ENCODE measurements at regions of chr9 and their contacts with region 1.

Region 1: DNA sequence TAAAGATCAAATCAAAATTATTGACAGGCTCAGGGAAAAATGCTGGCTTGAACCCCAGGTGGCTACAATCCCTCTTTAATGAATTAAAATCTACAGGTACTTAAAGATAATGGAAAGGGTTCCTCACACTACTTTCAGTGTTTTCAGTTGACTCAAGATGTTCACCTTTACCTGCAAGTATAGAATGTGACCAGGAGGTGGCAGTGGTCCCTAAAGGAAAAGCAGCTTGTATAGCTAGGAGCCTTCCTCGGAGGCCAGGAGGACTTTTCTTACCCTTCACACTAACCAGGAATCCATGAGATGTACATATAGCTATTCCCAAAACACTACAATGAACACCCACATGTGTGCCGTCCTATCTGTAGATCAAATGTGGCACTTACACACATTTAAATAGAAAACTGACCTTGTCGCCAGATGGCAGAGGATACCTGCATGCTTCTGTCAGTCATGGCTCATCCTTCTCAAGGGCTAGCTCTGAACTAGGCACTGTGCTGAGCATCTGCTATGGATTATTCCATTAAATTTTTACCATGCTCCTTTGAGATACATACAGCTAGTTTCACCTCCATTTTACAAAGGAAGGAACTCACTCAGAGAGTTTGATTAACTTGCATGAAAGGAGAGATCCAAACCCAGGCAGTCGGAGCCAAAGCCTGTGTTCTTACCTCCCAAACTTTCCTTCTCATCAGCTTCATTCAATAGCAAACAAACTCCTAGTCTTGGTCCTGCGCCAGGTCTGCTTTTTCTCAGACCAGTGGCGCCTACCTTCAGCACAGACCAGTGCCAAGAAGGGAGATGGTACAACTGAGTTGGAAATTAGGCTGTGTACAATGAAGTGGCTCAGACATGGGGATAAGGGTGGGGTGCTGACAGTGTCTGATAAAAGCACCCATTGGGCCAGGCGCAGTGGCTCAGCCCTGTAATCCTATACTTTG is 24.5 kb downstream of the C9orf152 start:
- DNase-seq: peak; percentile 77
- ATAC-seq: peak; percentile 35; the same call in 1 of the 2 replicates
- H3K4me3 ChIP-seq: no peak overlapping the region
- H3K27ac ChIP-seq: no peak overlapping the region
- H3K4me1 ChIP-seq: peaks cover 9% of the 10 kb centered on the region
- H3K27me3 ChIP-seq: no peaks in the 10 kb centered on the region
- CTCF ChIP-seq: peak; percentile 73
- POLR2A ChIP-seq: no peak; the same call in 1 of the 2 replicates
- RAD21 ChIP-seq: peak; percentile 83

Region 2: GRCh38 chr9:110217656-110218099 is 34.2 kb after region 1 on chr9:
- CTCF ChIA-PET with region 1: interaction called, 3 read pairs
- POLR2A ChIA-PET with region 1: no interaction called
- dilution Hi-C with region 1: no loop called
- in situ Hi-C with region 1: no loop called
- intact Hi-C with region 1: loop called (anchors 2 kb)
- DNase-seq: peak; percentile 63
- ATAC-seq: peak; percentile 74
- H3K4me3 ChIP-seq: no peak overlapping the region
- H3K27ac ChIP-seq: no peak overlapping the region
- H3K4me1 ChIP-seq: no peaks in the 10 kb centered on the region; the same call in 1 of the 2 replicates
- H3K27me3 ChIP-seq: peaks cover 2% of the 10 kb centered on the region
- CTCF ChIP-seq: peak; percentile 75
- POLR2A ChIP-seq: no peak
- RAD21 ChIP-seq: peak; percentile 68

Region 3: DNA sequence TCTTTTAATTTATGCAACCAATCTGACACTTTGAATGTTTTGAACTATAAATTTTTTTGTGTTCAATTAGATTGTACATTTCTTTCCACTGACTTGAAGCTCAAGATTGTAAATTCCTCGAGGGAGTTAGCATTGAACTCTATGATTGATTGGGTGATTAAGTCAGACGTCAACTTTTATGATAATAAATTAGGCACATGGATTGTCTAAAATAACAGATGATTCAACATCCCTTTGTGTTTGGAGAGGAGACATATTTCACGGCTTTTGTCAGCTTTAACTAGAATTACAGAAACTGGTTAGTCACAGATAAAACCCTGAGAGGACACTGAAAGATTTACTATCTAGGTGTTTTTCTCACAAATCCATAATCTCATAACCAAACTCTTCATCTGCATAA is 186.8 kb after region 1 on chr9:
- CTCF ChIA-PET with region 1: no interaction called
- POLR2A ChIA-PET with region 1: no interaction called
- dilution Hi-C with region 1: no loop called
- in situ Hi-C with region 1: no loop called
- intact Hi-C with region 1: loop called (anchors 10 kb)
- DNase-seq: peak; percentile 34
- ATAC-seq: no peak; the same call in 1 of the 2 replicates
- H3K4me3 ChIP-seq: no peak overlapping the region
- H3K27ac ChIP-seq: no peak overlapping the region
- H3K4me1 ChIP-seq: no peaks in the 10 kb centered on the region
- H3K27me3 ChIP-seq: no peaks in the 10 kb centered on the region
- CTCF ChIP-seq: no peak
- POLR2A ChIP-seq: no peak
- RAD21 ChIP-seq: no peak

Region 4: DNA sequence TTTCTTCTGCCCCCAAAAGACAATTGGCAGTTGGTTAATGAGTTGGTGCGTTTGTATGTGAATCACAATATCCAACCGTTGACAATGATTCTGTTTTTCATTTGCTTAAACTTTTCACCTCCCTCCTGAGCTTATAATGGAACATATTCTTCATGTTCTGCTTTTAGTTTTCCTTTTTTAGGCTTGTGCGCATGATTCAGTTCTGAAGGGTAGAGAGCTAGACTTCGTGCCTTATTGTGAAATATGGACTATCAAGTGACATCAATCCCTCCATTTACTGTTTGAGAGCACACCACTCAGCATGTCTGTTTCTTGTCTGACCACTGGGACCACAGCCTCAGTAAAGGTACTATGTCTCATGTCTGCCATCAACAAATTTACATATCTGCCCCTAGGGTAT is 885.3 kb after region 1 on chr9:
- CTCF ChIA-PET with region 1: no interaction called
- POLR2A ChIA-PET with region 1: no interaction called
- dilution Hi-C with region 1: no loop called
- in situ Hi-C with region 1: loop called (anchors 25 kb)
- intact Hi-C with region 1: no loop called
- DNase-seq: no peak
- ATAC-seq: no peak
- H3K4me3 ChIP-seq: no peak overlapping the region
- H3K27ac ChIP-seq: no peak overlapping the region
- H3K4me1 ChIP-seq: no peaks in the 10 kb centered on the region; the same call in 1 of the 2 replicates
- H3K27me3 ChIP-seq: peaks cover 3% of the 10 kb centered on the region; the same call in 1 of the 2 replicates
- CTCF ChIP-seq: no peak
- POLR2A ChIP-seq: no peak
- RAD21 ChIP-seq: no peak

Measured in IMR-90 (cell line).